ENCODE measurements at regions of chr19 and their contacts with region 1.

Region 1: DNA sequence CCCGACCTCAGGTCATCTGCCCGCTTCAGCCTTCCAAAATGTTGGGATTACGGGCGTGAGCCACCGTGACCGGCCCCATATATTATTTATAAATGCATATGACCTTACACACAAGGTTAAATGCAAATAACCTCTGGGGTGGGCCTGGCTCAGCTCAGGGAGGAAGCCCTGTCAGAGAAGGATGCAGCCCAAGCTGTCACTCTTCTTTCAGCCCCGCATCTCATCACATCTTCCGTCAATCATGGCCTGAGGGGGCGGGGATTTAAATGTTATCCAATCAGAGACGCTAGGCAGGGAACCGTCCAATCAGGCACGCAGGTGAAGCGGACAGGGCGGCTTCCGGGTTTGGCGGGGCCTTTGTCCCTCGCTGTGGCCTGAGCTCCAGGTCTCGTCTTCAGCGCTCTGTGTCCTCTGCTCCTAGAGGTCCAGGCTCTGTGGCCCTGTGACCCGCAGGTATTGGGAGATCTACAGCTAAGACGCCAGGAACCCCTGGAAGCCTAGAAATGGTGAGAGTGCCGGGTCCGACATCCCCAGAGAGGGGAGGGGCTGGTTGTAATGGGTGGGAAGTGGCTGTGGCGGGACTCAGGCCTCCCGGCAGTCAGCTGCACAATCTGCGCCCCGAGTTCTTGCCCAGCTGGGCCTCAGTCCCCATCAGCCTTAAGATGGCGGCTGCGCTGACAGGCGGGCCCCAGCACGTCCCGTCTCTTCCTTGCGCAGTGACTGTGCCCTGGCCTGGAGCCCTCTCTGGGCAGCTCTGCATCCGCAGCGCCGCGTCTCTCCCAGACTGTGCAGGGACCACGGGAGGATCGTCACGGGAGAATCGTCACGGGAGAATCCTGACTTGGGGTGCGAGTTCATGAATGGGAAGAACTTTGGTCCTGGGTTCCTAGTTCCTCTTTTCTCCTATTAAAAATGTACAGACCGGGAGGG is at the start of gene ZNF430:
- DNase-seq: peak; percentile 98
- H3K4me3 Mint-ChIP-seq: peak within 1 kb of the TSS; percentile 99
- H3K27ac Mint-ChIP-seq: peak within 1 kb of the TSS; percentile 99
- H3K4me1 Mint-ChIP-seq: peaks cover 27% of the 10 kb centered on the region
- H3K27me3 Mint-ChIP-seq: no peaks in the 10 kb centered on the region
- total RNA-seq, gene ZNF430: 21.6 and 25.1 TPM in 2 replicates

Region 2: DNA sequence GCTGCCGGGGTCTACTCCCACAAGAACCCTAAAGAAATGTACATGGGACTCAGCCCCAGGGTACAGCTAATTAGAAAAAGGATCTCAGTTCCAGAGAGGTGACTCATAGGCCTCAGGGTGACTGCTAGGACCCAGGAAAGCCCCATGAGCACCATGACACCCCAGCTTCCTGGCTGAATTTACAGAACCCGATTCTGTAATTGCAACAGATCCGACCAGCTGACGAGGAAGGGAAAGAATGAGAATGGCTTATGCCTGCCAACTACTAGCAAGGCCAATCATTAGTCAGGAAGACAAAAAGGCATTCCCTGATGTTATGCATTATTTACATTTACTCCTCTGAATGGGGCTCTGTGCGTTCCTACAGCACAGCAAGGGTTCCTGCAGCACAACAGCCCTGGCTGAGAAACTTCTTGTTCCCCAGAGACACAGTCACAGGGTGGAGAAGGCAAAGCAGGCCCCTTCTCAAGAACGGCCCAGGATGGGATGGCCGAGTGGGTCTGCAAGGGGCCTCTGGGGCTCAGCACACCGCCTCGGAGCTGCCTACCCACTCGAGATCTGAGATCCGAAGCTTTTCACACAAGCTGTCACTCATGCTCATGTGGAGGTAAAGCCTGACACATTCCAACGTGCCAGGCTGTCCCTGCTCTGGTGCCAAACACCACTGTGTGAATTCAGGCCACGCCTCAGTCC is 1429.3 kb before region 1 on chr19:
- intact Hi-C with region 1: loop called (anchors 10 kb)
- DNase-seq: peak; percentile 92
- H3K4me3 Mint-ChIP-seq: peak overlapping the region; percentile 75
- H3K27ac Mint-ChIP-seq: peak overlapping the region; percentile 94
- H3K4me1 Mint-ChIP-seq: peaks cover 60% of the 10 kb centered on the region
- H3K27me3 Mint-ChIP-seq: no peaks in the 10 kb centered on the region

Region 3: GRCh38 chr19:20776083-20777076 is 244.2 kb before region 1 on chr19 and contains the start of gene ZNF66:
- intact Hi-C with region 1: loop called (anchors 2 kb)
- DNase-seq: peak; percentile 98
- H3K4me3 Mint-ChIP-seq: peak within 1 kb of the TSS; percentile 96
- H3K27ac Mint-ChIP-seq: peak within 1 kb of the TSS; percentile 95
- H3K4me1 Mint-ChIP-seq: peaks cover 4% of the 10 kb centered on the region
- H3K27me3 Mint-ChIP-seq: no peaks in the 10 kb centered on the region
- total RNA-seq, gene ZNF66: 7.9 and 10.7 TPM in 2 replicates

Region 4: GRCh38 chr19:20999731-21000352 is 20.7 kb before region 1 on chr19:
- intact Hi-C with region 1: loop called (anchors 2 kb)
- DNase-seq: peak; percentile 94
- H3K4me3 Mint-ChIP-seq: peak overlapping the region; percentile 94
- H3K27ac Mint-ChIP-seq: peak overlapping the region; percentile 84
- H3K4me1 Mint-ChIP-seq: peaks cover 7% of the 10 kb centered on the region
- H3K27me3 Mint-ChIP-seq: no peaks in the 10 kb centered on the region

Region 5: DNA sequence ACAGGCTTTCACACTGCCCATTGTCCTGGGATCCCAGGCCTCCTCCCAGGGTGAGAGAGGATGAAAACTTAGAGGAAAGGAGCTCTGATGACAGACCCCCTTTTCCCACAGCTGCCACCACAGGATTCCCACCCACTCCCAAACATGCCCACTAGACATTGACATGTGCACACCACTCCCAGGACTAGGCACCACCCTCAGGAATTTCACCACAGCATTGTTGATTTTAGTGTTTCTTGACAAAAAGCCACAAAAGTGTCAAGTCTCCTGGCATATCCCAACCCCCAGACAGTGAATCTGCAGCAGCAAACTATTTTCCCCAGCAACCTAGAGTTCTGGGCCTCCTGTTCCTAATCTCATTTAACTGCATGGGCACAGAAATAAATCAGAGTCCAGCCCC is 71.5 kb after region 1 on chr19:
- intact Hi-C with region 1: no loop called
- DNase-seq: no peak
- H3K4me3 Mint-ChIP-seq: no peak overlapping the region
- H3K27ac Mint-ChIP-seq: no peak overlapping the region
- H3K4me1 Mint-ChIP-seq: no peaks in the 10 kb centered on the region
- H3K27me3 Mint-ChIP-seq: no peaks in the 10 kb centered on the region

Region 6: DNA sequence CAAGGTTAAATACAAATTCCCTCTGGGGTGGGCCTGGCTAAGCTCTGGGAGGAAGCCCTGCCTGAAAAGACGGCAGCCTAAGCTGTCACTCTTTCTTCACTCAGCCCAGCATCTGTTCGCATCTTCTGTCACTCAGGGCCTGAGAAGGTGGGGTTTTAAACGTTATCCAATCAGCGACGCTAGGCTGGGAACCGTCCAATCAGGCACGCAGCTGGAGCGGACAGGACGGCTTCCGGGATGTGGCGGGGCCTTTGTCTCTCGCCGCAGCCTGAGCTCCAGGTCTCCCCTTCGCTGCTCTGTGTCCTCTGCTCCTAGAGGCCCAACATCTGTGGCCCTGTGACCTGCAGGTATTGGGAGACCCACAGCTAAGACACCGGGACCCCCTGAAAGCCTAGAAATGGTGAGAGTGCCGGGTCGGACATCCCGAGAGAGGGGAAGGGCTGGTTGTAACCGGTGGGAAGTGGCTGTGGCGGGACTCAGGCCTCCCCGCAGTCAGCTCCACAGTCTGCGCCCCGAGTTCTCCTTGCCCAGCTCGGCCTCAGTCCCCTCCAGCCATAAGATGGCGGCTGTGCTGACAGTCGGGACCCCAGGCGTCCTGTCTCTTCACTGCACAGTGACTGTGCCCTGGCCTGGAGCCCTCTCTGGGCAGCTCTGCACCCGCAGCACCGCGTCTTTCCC is 121.4 kb after region 1 on chr19 and contains the start of gene ZNF431:
- intact Hi-C with region 1: loop called (anchors 2 kb)
- DNase-seq: peak; percentile 96
- H3K4me3 Mint-ChIP-seq: peak within 1 kb of the TSS; percentile 92
- H3K27ac Mint-ChIP-seq: peak within 1 kb of the TSS; percentile 96
- H3K4me1 Mint-ChIP-seq: peaks cover 22% of the 10 kb centered on the region
- H3K27me3 Mint-ChIP-seq: no peaks in the 10 kb centered on the region
- total RNA-seq, gene ZNF431: 14.2 and 14.8 TPM in 2 replicates

Region 7: DNA sequence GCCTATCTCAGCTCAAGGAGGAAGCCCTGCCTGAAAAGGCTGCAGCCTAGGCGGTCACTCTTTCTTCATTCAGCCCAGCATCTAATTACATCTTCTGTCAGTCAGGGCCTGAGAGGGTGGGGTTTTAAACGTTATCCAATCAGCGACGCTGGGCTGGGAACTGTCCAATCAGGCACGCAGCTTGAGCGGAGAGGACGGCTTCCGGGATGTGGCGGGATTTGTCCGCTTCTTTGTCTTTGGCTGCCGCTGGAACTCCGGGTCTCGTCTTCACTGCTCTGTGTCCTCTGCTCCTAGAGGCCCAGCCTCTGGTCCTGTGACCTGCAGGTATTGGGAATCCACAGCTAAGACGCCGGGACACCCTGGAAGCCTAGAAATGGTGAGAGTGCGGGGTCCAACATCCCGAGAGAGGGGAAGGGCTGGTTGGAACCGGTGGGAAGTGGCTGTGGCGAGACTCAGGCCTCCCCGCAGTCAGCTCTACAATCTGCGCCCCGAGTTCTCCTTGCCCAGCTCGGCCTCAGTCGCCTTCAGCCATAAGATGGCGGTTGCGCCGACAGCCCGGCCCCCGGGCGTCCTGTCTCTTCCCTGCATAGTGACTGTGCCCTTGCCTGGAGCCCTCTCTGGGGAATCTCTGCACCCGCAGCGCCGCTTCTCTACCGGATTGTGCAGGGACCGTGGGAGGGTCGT is 338.3 kb after region 1 on chr19 and contains the start of gene ZNF738:
- intact Hi-C with region 1: no loop called
- DNase-seq: peak; percentile 94
- H3K4me3 Mint-ChIP-seq: peak within 1 kb of the TSS; percentile 98
- H3K27ac Mint-ChIP-seq: peak within 1 kb of the TSS; percentile 95
- H3K4me1 Mint-ChIP-seq: peaks cover 12% of the 10 kb centered on the region
- H3K27me3 Mint-ChIP-seq: no peaks in the 10 kb centered on the region
- total RNA-seq, gene ZNF738: 11.5 and 11.8 TPM in 2 replicates

Measured in activated CD4-positive, alpha-beta T cell treated with anti-CD3 and anti-CD28 coated beads, Interleukin-2, amount 10 ng/mL, durations not matched to agents 24 days and 14 days (primary cell).